GM10248 (cell line): ENCODE measurements at regions of chr17 and their contacts with region 1.

Region 1: GRCh38 chr17:44919885-44920564 is 4.7 kb upstream of the GFAP start:
- DNase-seq: peak; percentile 90
- CTCF ChIP-seq: peak; percentile 92

Region 2: DNA sequence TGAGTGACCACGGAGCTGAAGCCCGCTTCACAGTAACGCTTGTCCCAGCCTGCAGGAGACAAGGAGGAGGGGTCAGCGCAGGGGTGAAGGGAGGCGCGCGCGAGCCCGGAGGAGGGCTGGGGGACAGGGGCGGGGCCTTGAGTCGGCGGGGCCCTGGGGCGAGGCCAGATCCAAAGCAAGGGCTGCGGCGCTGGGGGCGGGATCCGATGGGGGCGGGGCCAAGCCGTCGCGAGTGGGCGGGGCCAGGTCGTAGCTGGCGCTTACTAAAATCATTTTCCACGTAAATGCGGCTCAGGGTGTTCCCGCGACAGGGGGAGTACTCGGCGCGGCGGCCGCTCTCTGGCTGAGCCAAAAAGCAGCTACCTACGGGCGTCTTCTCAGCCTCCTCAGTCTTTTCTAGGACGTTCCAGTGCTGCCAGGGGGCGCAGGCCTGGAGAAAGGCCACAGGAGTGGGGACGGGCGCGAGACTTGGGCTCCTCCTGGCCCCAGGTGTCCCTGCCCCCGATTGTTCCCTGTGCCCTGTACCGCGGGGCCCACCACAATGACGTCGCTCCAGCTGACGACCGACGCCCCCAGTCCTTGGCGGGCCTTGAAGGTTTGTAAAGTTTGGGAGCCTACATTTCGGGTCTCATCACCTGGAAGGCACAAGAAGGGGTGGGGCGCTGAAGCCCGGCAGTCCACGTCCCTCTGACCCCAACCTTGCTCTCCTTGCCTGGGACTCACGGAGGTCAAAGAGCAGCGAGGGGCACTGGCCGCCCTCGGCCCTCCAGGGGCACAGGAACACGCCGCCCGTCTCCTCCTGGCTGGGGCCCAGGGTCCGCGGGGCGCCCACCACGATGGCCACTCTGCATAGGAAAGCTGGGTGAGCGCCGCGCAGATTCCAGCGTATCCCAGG is 534.5 kb before region 1 on chr17:
- CTCF ChIA-PET with region 1: no interaction called
- POLR2A ChIA-PET with region 1: no interaction called
- DNase-seq: peak; percentile 93
- CTCF ChIP-seq: peak; percentile 4

Region 3: GRCh38 chr17:44863061-44863918 is 56.7 kb before region 1 on chr17:
- CTCF ChIA-PET with region 1: no interaction called
- POLR2A ChIA-PET with region 1: no interaction called
- DNase-seq: no peak
- CTCF ChIP-seq: no peak

Region 4: DNA sequence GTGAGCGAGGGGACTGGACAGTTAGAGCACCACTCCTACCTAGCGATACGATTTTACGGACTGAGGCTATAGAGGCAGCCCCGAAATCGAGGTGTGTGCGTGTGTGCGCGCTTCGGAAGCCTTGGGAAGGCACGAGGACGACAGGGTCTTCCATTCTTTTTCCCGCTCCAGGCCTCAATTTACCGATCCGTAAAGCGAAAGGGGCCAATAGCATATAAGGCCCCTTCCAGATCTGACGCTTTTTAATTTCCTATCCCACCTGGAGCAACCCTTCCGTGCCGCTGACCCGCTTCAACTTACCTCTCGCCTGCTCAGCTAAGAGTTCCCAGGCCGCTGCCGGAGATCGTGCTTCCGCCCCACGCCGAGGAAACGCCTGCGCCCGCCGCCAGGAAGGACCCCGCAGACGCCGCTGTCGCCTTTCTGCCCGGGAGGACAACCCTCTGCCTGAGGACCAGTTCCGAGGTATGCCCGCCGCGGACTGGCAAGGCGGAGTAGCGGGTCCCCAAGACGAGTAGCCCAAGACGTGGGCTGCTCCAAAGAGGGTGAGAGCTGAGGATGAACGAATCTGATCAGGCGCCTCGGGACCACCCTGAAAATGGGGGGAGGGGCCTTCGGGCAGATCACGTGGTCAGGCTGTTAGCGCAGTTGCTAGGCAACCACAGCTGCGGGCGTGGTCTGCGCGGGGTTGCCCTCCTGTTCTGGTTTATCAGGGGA is 20.8 kb before region 1 on chr17 and contains the start of gene EFTUD2:
- CTCF ChIA-PET with region 1: interaction called, 65 read pairs
- POLR2A ChIA-PET with region 1: no interaction called
- DNase-seq: peak; percentile 95
- CTCF ChIP-seq: no peak

Region 5: GRCh38 chr17:44932496-44933097 is 12.6 kb after region 1 on chr17:
- CTCF ChIA-PET with region 1: interaction called, 45 read pairs
- POLR2A ChIA-PET with region 1: no interaction called
- DNase-seq: no peak
- CTCF ChIP-seq: no peak